ENCODE measurements at regions of chr2 and their contacts with region 1.

Region 1: GRCh38 chr2:27582695-27583389 is at the start of gene ZNF512:
- DNase-seq: peak; percentile 97
- total RNA-seq, gene ZNF512: 25.2 to 27.4 TPM

Region 2: DNA sequence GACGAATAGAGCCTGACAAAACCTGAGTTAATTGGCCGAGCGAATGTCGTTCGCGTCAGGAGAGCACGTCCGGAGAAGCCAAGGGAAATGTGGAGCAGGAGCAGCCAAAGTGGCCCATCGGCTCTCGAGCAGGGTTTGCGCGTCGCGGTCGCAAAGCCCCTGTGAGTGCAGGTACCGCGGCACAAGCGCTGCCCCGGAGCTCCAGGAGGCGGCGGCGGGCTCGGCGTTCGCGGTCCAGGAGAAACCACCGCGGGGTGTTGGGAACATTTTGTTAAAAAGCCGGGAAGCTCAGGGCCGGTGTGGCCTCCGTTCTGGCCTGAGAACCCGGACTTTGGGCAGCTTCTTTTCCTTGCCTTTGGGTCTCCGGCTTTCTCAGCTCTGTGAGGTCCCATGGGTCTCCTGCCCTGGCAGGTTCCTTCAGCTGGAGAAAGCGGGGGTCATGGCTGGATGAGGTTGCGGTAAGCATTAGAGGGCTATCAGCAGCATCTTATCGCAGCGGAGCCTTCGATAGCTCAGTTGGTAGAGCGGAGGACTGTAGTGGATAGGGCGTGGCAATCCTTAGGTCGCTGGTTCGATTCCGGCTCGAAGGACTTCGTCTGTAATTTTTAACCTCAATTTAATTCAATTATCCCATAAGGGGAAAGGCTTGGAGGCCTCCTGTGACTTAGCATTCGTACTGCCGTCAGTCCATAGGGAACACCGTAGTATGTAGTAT is 532.4 kb before region 1 on chr2:
- intact Hi-C with region 1: no loop called
- DNase-seq: peak; percentile 95

Region 3: GRCh38 chr2:27489498-27490397 is 93.1 kb before region 1 on chr2 and contains the start of gene IFT172:
- intact Hi-C with region 1: loop called in 1 of 2 experiments (anchors 10 kb)
- DNase-seq: peak; percentile 99
- total RNA-seq, gene IFT172: 15.8 to 23.4 TPM

Region 4: DNA sequence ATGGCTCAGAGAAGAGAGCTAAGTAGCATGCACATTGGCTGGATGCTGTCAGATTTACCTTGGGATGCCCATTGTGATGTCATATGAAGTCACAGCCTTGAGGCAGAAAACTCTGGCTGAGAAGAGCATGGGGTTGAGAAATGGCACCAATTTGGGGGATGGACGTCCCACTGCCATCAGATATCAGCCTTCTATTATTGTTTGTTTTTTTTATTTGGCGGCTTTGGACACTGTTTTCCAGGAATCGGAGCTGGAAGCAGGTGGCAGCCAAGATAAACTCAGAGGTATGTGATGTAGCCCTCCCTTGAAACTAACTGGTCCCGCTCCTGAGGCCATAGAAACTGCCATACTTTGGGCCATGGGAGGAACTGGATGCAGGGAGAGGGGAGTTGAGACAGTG is 45.6 kb before region 1 on chr2:
- intact Hi-C with region 1: no loop called
- DNase-seq: no peak